HepG2 (cell line): ENCODE measurements at regions of chr15 and their contacts with region 1.

Region 1: GRCh38 chr15:51366960-51367648 is 25.6 kb downstream of the GLDN start:
- DNase-seq: no peak
- ATAC-seq: peak; percentile 87
- H3K4me3 ChIP-seq: peak overlapping the region in 2 of 3 experiments; percentile 40 to 45; a peak in 3 of 6 replicates
- H3K27ac ChIP-seq: no peak overlapping the region
- H3K4me1 ChIP-seq: peaks cover 43% of the 10 kb centered on the region
- H3K27me3 ChIP-seq: no peaks in the 10 kb centered on the region
- CTCF ChIP-seq: peak; percentile 18; the same call in 1 of the 2 replicates
- EP300 ChIP-seq: no peak
- POLR2A ChIP-seq: no peak
- RAD21 ChIP-seq: no peak

Region 2: GRCh38 chr15:51286791-51287190 is 80.3 kb before region 1 on chr15:
- CTCF ChIA-PET with region 1: no interaction called
- POLR2A ChIA-PET with region 1: no interaction called
- in situ Hi-C with region 1: no loop called
- intact Hi-C with region 1: loop called (anchors 5 kb)
- DNase-seq: peak; percentile 15
- ATAC-seq: peak; percentile 33; the same call in 2 of the 3 replicates
- H3K4me3 ChIP-seq: no peak overlapping the region
- H3K27ac ChIP-seq: no peak overlapping the region
- H3K4me1 ChIP-seq: peaks cover 53% of the 10 kb centered on the region
- H3K27me3 ChIP-seq: no peaks in the 10 kb centered on the region
- CTCF ChIP-seq: peak; percentile 44
- EP300 ChIP-seq: no peak
- POLR2A ChIP-seq: no peak
- RAD21 ChIP-seq: peak; percentile 39; the same call in 1 of the 2 replicates